H1 (cell line): ENCODE measurements at regions of chr6 and their contacts with region 1.

Region 1: DNA sequence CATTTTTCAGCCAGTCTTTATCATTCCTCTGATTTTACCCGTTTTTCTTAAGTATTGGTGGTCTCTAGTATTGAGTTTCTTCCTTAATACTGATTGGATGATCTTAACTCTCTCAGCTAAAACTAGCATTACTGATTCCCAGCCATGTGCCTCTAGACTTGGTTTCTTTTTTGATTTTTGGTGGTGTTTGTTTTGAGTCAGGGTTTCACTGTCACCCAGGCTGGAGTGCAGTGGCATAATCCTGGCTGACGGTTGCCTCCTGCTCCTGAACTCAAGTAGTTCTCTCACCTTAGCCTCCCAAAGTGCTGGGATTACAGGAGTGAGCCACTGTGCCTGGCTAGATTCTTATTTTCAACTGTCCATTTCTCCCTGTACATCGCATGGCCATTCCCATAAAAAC is 24.9 kb downstream of the DPPA5 start:
- DNase-seq: no peak
- H3K4me3 ChIP-seq: no peak overlapping the region
- H3K27ac ChIP-seq: no peak overlapping the region
- H3K4me1 ChIP-seq: no peaks in the 10 kb centered on the region
- H3K27me3 ChIP-seq: no peaks in the 10 kb centered on the region
- CTCF ChIP-seq: no peak
- EP300 ChIP-seq: no peak
- POLR2A ChIP-seq: no peak
- RAD21 ChIP-seq: no peak

Region 2: DNA sequence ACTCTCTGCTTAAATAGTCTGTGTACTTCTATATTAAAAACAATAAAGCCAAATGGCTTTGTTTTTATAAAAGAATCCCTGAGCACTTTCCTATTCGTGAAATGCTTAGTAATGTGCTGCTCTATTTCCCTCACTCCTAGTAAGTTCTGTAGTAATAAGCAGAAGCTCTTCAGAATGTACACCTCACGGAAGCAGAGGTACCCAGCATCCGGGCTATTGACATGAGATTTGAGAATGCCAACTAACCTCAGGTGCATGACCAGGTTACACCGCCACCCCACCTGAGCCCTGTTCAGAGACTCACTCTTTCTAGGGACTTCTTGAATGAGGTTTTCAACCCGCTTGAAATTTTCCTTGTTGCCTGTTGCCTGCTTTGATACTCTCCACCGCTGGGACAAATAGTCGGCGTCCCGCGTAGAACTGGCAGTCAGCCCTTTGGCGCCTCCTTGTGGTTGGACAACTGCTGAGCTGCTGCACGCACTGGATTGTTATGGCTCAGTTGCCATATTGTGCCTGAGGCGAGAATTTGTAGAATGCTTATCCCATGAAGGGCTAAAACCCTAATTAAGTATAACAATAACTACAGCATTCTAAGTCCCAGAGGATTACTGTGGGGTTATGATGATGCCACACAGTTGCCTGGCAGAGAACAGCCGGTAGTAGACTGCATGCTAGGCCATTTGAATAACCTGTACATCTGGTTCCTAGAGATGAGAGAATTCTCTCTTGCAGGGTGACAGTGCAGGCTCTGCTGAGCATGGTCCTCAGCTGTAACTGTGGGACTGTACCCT is 199.4 kb before region 1 on chr6:
- CTCF ChIA-PET with region 1: interaction called, 20 read pairs
- POLR2A ChIA-PET with region 1: no interaction called
- DNase-seq: peak; percentile 53 to 94
- H3K4me3 ChIP-seq: no peak overlapping the region
- H3K27ac ChIP-seq: no peak overlapping the region
- H3K4me1 ChIP-seq: no peaks in the 10 kb centered on the region
- H3K27me3 ChIP-seq: no peaks in the 10 kb centered on the region
- CTCF ChIP-seq: peak; percentile 97 to 99 (median 97)
- EP300 ChIP-seq: no peak
- POLR2A ChIP-seq: no peak
- RAD21 ChIP-seq: peak; percentile 99

Region 3: GRCh38 chr6:73285674-73286283 is 43.4 kb before region 1 on chr6:
- CTCF ChIA-PET with region 1: interaction called, 105 read pairs
- POLR2A ChIA-PET with region 1: interaction called, 6 read pairs
- DNase-seq: no peak
- H3K4me3 ChIP-seq: no peak overlapping the region
- H3K27ac ChIP-seq: no peak overlapping the region
- H3K4me1 ChIP-seq: no peaks in the 10 kb centered on the region
- H3K27me3 ChIP-seq: no peaks in the 10 kb centered on the region
- CTCF ChIP-seq: peak in 2 of 3 experiments; percentile 46 to 47; a peak in 2 of 4 replicates
- EP300 ChIP-seq: no peak
- POLR2A ChIP-seq: no peak
- RAD21 ChIP-seq: peak; percentile 63 to 72

Region 4: GRCh38 chr6:73299151-73299971 is 29.8 kb before region 1 on chr6:
- CTCF ChIA-PET with region 1: interaction called, 11 read pairs
- POLR2A ChIA-PET with region 1: no interaction called
- DNase-seq: peak in 1 of 2 experiments; percentile 54
- H3K4me3 ChIP-seq: peak overlapping the region in 2 of 4 experiments; percentile 11 to 43; a peak in 2 of 8 replicates
- H3K27ac ChIP-seq: no peak overlapping the region
- H3K4me1 ChIP-seq: no peaks in the 10 kb centered on the region; a peak in 1 of 7 replicates
- H3K27me3 ChIP-seq: no peaks in the 10 kb centered on the region
- CTCF ChIP-seq: no peak
- EP300 ChIP-seq: no peak
- POLR2A ChIP-seq: no peak
- RAD21 ChIP-seq: no peak

Region 5: DNA sequence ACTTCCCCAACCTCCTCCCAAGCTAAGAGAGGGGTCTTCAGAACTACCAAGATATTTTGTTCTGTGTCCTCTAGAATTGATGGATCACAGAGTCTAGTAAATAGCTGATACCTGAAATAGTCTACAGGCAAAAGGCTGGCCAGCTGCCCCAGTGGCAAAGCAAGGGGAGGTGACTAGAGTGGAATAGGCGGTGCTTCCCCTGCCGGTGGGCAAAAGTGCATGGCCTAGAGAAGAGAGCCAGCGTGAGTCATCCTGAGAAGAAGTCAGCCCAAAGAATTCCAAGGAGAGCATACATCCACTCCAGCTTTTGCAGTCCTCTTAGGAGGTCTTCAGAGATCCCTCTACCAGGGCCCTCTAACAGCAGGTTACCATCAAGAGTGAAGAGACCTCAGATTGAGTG is 10.1 kb after region 1 on chr6:
- CTCF ChIA-PET with region 1: interaction called, 32 read pairs
- POLR2A ChIA-PET with region 1: no interaction called
- DNase-seq: peak in 1 of 2 experiments; percentile 48
- H3K4me3 ChIP-seq: no peak overlapping the region
- H3K27ac ChIP-seq: no peak overlapping the region
- H3K4me1 ChIP-seq: no peaks in the 10 kb centered on the region
- H3K27me3 ChIP-seq: no peaks in the 10 kb centered on the region
- CTCF ChIP-seq: no peak
- EP300 ChIP-seq: no peak
- POLR2A ChIP-seq: no peak
- RAD21 ChIP-seq: no peak

Region 6: GRCh38 chr6:73364549-73364948 is 35.3 kb after region 1 on chr6:
- CTCF ChIA-PET with region 1: interaction called, 12 read pairs
- POLR2A ChIA-PET with region 1: no interaction called
- DNase-seq: no peak
- H3K4me3 ChIP-seq: no peak overlapping the region
- H3K27ac ChIP-seq: no peak overlapping the region
- H3K4me1 ChIP-seq: peaks cover 0 to 6% (median 2%) of the 10 kb centered on the region in 4 experiments; a peak in 3 of 7 replicates
- H3K27me3 ChIP-seq: no peaks in the 10 kb centered on the region
- CTCF ChIP-seq: no peak
- EP300 ChIP-seq: no peak
- POLR2A ChIP-seq: no peak
- RAD21 ChIP-seq: no peak

Region 7: DNA sequence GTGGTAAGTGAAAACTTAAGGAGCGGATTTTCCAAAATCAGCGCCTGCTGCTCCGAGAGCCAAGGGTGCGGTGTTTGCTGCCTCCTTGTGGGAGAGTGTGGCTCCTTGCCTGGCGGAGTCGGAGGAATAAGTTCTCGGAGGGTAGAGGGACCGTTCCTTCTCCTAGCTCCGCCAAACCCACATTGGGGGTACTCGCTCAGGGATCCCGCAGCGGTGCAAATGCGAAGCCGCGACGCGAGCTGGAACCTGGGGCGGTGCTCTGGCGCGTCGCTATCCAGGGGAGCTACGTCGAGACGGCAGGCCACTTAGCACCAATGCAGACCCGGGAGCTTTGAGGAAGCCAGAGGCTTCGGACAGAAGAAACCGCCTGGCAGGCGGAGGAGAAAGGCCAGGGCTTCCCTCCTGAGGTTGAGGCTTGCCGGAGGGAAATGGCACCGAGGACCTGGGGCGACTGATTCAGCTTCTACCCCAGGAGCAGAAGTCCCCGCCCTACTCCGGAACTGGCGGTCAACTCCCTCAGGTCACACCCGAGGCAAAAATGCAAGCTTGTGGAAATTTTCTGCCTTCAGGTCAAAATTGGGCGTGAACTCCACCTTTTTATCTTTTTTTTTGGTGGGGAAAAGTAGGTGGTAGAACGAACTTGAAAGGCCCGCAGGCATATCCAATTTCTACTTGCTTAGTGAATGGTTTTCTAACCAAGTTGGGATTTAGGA is 59.8 kb after region 1 on chr6:
- CTCF ChIA-PET with region 1: interaction called, 40 read pairs
- POLR2A ChIA-PET with region 1: no interaction called
- DNase-seq: peak; percentile 77 to 82
- H3K4me3 ChIP-seq: peak overlapping the region; percentile 28 to 68 (median 58)
- H3K27ac ChIP-seq: 0 out of 2 replicates have a peak overlapping the region, but pooled peaks have one; percentile 27
- H3K4me1 ChIP-seq: peaks cover 0 to 6% (median 0%) of the 10 kb centered on the region in 4 experiments; a peak in 3 of 7 replicates
- H3K27me3 ChIP-seq: no peaks in the 10 kb centered on the region
- CTCF ChIP-seq: peak; percentile 89 to 94 (median 90)
- EP300 ChIP-seq: no peak
- POLR2A ChIP-seq: peak in 1 of 2 experiments; percentile 74; a peak in 1 of 3 replicates
- RAD21 ChIP-seq: peak; percentile 94